ENCODE measurements at regions of chr11 and their contacts with region 1.

Region 1: DNA sequence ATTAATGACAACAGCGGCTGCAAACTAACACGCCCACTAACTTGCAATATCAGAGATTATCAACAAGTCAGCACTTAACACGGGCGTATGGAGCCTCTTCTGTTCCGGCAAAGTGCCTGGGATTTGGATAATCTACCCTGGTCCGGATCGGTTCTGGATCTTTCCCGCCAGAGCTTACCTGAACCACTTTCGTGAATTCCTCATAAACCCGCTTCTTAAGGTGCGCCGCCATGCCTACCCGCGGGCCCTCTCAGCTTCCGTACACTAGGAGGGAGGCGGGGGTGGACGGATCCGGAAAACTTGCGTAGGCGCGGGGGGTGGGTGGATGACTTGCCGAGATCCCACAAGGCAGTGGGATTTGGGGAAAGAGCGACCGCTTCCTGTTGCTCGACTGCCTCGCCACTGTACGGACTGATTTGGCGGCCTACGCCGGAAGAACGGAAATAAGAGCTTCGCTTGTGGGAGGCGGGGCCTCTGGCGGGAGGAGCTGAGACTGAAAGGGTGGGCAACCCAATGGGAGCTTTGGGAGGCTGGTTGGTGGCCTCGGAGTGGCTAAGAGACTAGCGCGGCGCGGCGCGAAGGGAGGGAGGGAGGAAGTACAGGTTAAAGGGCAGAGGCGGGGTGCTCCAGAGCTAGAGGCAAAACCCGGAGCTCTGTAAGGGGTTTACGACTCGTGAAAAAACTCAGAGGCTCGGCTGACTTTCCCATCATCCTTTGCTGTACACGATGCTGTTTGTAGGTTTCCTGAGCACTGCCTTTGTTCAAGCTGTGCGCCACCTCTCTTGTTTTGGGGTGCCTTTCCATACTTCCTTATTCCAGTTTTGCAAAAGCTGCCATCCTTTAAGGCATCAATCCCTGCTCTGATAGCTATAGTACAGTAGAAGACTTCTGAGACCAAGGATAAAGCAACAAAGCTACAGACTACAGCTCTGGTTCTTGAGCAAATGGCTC is at the start of gene INTS4:
- DNase-seq: peak; percentile 99
- ATAC-seq: peak; percentile 97 to 99
- H3K4me3 ChIP-seq: peak within 1 kb of the TSS; percentile 70 to 92 (median 78)
- H3K27ac ChIP-seq: peak within 1 kb of the TSS; percentile 80 to 90 (median 87)
- H3K4me1 ChIP-seq: peaks cover 19 to 20% of the 10 kb centered on the region in 2 donors
- H3K27me3 ChIP-seq: no peaks in the 10 kb centered on the region
- CTCF ChIP-seq: no peak
- POLR2A ChIP-seq: peak; percentile 22 to 59
- total RNA-seq, gene INTS4: 10.0 to 13.8 (median 11.9) TPM

Region 2: DNA sequence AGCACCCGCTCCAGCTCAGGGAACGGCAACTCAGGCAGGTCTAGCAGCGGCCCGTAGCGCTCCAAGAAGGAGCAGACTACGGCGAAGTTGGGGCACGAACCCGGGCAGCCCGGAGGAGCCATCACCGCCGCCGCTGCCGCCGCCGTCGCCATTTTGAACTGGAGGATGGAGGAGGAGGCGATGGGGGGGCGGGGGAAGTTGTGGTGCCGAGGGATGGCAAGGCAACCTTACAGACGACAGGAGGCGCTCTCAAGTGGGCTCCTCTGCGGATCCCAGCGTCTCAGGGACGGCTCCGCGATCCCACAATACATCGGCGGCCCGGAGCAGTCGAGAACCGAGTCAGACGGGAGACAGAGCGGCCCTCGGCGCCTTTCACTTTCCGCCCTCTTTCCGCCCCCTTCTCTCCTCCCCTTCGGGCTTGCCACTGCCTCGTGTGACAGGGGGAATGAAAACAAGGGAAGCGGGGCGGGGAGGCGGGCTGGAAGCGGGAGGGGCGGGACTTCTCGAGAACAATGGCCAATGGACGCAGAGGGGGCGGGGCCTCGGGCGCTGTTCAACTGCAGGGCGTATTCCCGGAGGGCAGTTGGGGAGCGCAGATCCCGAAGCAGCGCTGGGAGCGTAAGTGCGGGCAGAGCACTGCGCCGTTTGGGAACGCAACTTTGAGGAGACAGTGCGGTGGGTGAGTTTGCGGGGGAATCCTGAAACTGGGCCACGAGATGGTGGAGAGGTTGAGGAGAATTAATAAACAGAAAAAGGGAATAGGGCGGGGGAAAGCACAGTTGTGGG is 173.9 kb before region 1 on chr11 and contains the starts of genes AAMDC and RSF1:
- in situ Hi-C with region 1: loop called in 2 of 4 experiments (anchors 10 to 25 kb)
- intact Hi-C with region 1: loop called (anchors 1 kb)
- DNase-seq: peak; percentile 98 to 99
- ATAC-seq: peak; percentile 84
- H3K4me3 ChIP-seq: peak within 1 kb of the TSS; percentile 92 to 97 (median 96)
- H3K27ac ChIP-seq: peak within 1 kb of the TSS; percentile 98 to 99 (median 99)
- H3K4me1 ChIP-seq: peaks cover 51 to 53% of the 10 kb centered on the region in 2 donors
- H3K27me3 ChIP-seq: no peaks in the 10 kb centered on the region
- CTCF ChIP-seq: peak; percentile 25 to 71 (median 58)
- POLR2A ChIP-seq: peak; percentile 82 to 96
- total RNA-seq, gene AAMDC: 32.4 to 70.3 (median 48.3) TPM
- total RNA-seq, gene RSF1: 17.9 to 48.4 (median 45.7) TPM

Region 3: DNA sequence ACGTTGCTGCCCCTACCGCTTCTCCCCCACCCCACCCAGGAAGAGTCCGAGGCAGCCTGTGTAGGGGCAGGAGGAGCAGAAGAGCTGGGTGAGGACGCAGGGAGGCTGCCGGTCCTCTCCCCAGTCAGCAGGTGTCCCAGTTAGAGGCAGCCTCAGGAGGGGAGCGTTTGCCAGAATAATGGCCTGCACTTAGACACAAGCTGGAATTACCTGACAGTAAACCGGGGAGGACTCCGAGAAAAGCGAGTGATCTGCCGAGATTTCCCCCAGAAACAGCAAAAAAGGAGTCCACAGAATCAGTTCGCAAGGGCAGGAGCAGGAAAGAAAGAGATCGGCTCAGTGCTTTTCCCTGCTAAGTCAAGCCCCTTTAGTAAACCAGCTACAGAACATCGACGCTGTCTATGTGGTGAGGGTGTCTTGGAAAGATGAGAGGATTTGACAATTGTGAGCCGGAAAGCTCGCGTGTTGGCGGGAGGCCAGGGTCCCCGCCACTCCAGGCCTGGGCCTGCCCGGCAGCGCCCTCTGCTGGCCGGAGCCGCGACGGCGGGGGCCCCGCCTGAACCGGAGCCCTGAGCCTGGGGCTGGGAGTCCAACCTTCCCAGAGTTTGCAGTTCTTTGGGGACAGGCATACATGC is 51.3 kb after region 1 on chr11:
- in situ Hi-C with region 1: no loop called
- intact Hi-C with region 1: loop called (anchors 1 kb)
- DNase-seq: peak; percentile 58 to 69
- ATAC-seq: peak; percentile 91 to 93
- H3K4me3 ChIP-seq: peak overlapping the region; percentile 63 to 76 (median 67)
- H3K27ac ChIP-seq: peak overlapping the region; percentile 78 to 86 (median 79)
- H3K4me1 ChIP-seq: peaks cover 6 to 15% of the 10 kb centered on the region in 2 donors
- H3K27me3 ChIP-seq: no peaks in the 10 kb centered on the region
- CTCF ChIP-seq: peak; percentile 93 to 99 (median 96)
- POLR2A ChIP-seq: no peak

Region 4: DNA sequence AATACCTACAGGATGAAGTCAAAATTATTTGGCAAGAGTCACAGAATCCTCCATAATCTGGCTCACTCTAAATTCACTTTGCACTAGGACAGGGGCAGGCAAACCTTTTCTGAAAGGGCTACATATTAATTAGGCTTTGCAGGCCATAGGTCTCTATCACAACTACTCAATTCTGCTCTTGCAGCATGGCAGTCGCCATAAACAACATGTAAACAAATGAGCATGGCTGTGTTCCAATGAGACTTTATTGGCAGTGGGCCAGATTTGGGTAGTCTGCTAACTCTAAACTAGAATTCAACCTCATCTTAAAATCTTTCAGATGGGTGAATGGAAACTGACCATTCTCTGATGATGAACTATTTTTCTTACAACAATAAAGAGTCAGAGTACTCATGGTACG is 74.8 kb after region 1 on chr11:
- in situ Hi-C with region 1: no loop called
- intact Hi-C with region 1: loop called (anchors 5 kb)
- DNase-seq: no peak
- ATAC-seq: no peak
- H3K4me3 ChIP-seq: no peak overlapping the region
- H3K27ac ChIP-seq: peak overlapping the region in 1 of 4 donors; percentile 49
- H3K4me1 ChIP-seq: peaks cover 9 to 22% of the 10 kb centered on the region in 2 donors
- H3K27me3 ChIP-seq: no peaks in the 10 kb centered on the region
- CTCF ChIP-seq: no peak
- POLR2A ChIP-seq: no peak

Region 5: DNA sequence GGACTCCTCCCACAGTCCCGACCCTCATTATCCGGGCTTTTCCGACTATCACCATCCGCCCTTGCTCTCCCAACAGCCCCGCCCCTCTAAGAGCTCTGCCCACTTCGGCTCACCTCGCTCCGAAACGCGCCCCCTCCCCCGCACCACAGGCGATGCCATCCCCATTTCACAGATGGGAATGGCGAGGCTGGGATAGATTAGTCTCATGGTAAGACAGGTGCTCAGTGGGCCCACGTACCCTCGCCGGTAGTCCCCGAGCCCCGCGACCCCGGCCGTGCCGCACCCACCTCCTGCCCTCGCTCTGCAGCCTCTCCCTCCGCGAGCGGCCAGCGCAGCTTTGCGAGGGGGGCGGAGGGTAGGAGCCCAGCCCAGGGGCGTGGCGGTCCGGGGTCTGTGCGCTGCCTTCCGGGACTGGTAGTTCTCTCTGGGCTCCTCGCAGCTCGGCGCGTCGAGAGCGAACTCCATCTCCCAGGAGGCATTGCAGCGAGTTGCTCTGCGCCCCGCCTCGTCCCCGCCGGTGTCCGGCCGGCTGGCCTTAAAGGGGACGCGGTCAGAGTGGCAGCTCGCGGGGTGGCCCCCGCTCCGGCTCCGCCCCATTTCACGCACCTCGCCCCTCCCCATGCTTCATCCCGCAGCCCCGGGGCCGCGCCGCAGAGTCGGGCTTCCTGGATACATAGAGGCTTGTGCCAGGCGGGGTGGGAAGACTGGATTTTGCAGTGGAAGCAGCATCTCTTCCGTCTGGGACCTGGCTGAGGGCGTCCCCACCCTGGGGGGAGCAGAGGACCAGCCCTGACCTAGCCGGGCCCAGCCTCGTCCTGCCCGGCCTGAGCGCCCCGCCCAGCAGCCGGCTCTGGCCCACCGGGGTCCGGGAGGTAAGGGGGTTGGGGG is 193.8 kb after region 1 on chr11 and contains the starts of genes KCTD21 and USP35:
- in situ Hi-C with region 1: no loop called
- intact Hi-C with region 1: loop called (anchors 2 kb)
- DNase-seq: peak; percentile 96
- ATAC-seq: peak; percentile 88 to 92
- H3K4me3 ChIP-seq: peak within 1 kb of the TSS; percentile 63 to 100 (median 99)
- H3K27ac ChIP-seq: peak within 1 kb of the TSS; percentile 71 to 94 (median 86)
- H3K4me1 ChIP-seq: peaks cover 37 to 49% of the 10 kb centered on the region in 2 donors
- H3K27me3 ChIP-seq: no peaks in the 10 kb centered on the region
- CTCF ChIP-seq: no peak
- POLR2A ChIP-seq: peak; percentile 80 to 90
- total RNA-seq, gene KCTD21: 6.0 to 18.9 (median 15.8) TPM
- total RNA-seq, gene USP35: 4.6 to 6.1 (median 5.4) TPM

Region 6: GRCh38 chr11:78416305-78417178 is 421.9 kb after region 1 on chr11:
- in situ Hi-C with region 1: no loop called
- intact Hi-C with region 1: loop called (anchors 5 kb)
- DNase-seq: peak; percentile 66 to 78
- ATAC-seq: peak; percentile 63 to 76
- H3K4me3 ChIP-seq: peak overlapping the region; percentile 65 to 82 (median 70)
- H3K27ac ChIP-seq: peak overlapping the region; percentile 81 to 96 (median 85)
- H3K4me1 ChIP-seq: peaks cover 15% of the 10 kb centered on the region in 2 donors
- H3K27me3 ChIP-seq: peaks cover 0 to 4% (median 0%) of the 10 kb centered on the region in 3 donors
- CTCF ChIP-seq: peak; percentile 18 to 45 (median 33)
- POLR2A ChIP-seq: peak; percentile 75 to 92

Region 7: DNA sequence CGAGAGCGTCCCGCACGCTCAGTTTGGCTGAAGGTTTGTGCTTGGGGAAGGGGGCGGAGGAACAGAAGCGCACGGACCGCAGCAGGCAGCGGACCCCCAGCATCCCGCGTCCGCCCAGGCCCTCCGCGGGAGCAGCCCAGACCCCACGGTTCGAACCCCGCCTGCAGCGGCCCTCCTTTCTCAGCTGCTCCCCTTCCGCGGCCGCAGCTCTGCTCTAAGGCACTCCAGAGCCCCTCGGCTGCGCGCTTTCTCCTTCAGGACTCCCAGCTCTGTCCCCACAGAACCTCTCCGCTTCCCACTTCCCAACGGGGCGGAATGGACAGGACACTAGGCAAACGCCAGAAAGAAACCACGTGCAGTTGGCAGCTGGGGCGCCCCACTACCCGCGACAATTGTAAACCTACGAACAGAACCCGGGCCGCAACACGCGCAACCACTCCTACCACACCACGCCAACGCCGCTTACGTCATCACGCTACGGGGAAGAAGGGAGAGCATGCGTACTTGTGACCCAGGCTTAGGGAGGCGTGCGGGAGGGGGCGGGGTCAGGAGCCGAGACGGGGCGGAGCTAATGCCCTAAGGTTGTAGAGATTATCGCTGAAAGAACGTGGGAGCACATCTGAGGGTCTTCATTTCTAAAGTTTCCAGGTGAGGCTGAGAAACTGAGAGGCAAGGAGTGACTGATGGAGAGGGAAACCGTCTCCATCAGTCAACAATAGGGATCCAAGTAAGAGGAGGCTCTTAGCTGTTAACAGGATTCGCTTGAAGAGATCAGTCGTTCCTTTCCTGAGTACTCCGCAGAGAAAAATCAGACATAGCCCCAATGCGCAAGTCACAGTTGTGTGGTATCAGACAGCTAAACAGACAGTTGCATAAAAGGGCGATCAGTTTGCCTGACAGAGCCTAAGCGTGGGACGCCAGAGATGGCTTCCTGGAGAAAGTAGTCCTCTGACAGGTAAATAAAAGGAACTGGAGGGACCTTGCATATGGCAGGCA is 580.0 kb after region 1 on chr11 and contains the start of gene NARS2:
- in situ Hi-C with region 1: no loop called
- intact Hi-C with region 1: loop called (anchors 10 kb)
- DNase-seq: peak; percentile 93 to 95
- ATAC-seq: peak; percentile 98 to 99
- H3K4me3 ChIP-seq: peak within 1 kb of the TSS; percentile 71 to 99 (median 88)
- H3K27ac ChIP-seq: peak within 1 kb of the TSS; percentile 89 to 93 (median 91)
- H3K4me1 ChIP-seq: peaks cover 4 to 16% of the 10 kb centered on the region in 2 donors
- H3K27me3 ChIP-seq: no peaks in the 10 kb centered on the region
- CTCF ChIP-seq: no peak
- POLR2A ChIP-seq: peak; percentile 61 to 70
- total RNA-seq, gene NARS2: 12.9 to 29.1 (median 18.7) TPM

Measured in gastrocnemius medialis (tissue), 4 donors.